A549 (cell line): ENCODE measurements at regions of chr15 and their contacts with region 1.

Region 1: GRCh38 chr15:100918034-100918689 is 995 bp upstream of the LRRK1 start:
- DNase-seq: peak; percentile 92 to 97
- ATAC-seq: peak; percentile 81 to 94
- H3K4me3 ChIP-seq: peak overlapping the region; percentile 79
- H3K27ac ChIP-seq: peak overlapping the region; percentile 94 to 95
- H3K4me1 ChIP-seq: peaks cover 17% of the 10 kb centered on the region
- CTCF ChIP-seq: peak; percentile 97
- EP300 ChIP-seq: no peak
- POLR2A ChIP-seq: peak; percentile 55
- RAD21 ChIP-seq: peak; percentile 90 to 97

Region 2: DNA sequence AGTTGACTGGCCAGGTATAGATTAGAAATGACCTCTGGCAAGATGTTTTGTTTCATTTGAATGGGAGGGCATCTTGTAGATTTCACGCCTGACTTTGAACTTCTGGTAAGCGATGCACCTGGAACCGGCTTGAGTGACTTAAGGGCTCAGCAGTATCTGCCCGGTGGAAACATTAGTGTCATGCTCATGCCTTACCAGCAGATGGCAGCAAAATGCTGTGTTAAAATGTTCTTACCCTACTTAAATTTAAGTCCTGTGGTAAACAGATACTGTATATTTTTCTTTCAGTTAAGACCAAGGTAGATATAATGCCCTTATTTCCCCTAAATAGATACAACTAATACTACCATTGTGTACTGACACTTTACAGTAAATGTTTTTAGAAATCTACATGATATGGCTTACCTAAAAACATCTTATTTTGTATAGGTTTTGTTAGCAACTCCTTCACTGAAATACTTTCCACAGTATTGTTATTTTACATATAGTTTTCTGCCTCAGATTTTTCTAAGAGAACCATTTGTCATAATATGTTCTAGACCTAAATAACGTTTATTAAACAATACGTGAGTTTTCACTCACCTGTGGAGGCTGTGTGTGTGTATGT is 290.3 kb before region 1 on chr15:
- CTCF ChIA-PET with region 1: interaction called, 14 read pairs
- POLR2A ChIA-PET with region 1: no interaction called
- DNase-seq: peak; percentile 58 to 84
- ATAC-seq: peak; percentile 88 to 95
- H3K4me3 ChIP-seq: no peak overlapping the region
- H3K27ac ChIP-seq: no peak overlapping the region
- H3K4me1 ChIP-seq: no peaks in the 10 kb centered on the region
- CTCF ChIP-seq: peak; percentile 96
- EP300 ChIP-seq: no peak
- POLR2A ChIP-seq: no peak
- RAD21 ChIP-seq: peak; percentile 93

Region 3: DNA sequence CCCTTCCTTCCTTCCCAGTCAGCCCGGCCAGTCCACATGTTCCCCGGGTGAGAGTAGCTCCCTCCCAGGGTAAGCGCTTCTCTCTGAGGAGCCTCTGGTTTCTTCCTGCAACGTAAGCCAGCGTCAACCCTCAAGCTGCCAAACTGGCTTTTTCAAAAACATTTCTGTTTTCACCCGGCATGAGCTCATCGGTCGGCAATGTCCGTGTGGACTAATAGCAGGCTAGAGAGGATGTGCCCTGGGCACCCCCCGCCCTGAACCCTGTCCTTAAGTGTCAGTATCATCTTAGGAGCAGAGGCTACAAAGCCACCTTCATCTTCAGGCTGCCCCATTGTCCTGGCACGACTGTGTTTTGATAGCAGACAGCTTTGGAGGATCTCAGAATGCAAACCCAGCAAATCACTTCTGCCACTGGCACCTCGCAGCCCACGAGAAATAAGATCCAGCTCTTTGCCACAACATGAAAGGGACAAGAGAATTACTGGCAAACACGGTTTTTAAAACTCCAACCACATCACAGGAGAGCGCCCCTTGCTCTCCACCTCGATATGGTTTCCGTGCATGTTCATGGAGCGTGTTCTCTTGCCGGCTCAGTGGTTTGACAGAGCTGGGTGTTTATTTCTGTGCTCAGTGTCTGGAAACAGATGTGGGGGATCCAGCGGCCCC is 28.6 kb before region 1 on chr15:
- CTCF ChIA-PET with region 1: interaction called, 26 read pairs
- POLR2A ChIA-PET with region 1: no interaction called
- DNase-seq: no peak
- ATAC-seq: no peak; a peak in 1 of 6 replicates
- H3K4me3 ChIP-seq: no peak overlapping the region
- H3K27ac ChIP-seq: no peak overlapping the region
- H3K4me1 ChIP-seq: no peaks in the 10 kb centered on the region
- CTCF ChIP-seq: no peak
- EP300 ChIP-seq: no peak
- POLR2A ChIP-seq: no peak
- RAD21 ChIP-seq: no peak

Region 4: GRCh38 chr15:100934726-100935125 is 16.6 kb after region 1 on chr15:
- CTCF ChIA-PET with region 1: interaction called, 65 read pairs
- POLR2A ChIA-PET with region 1: interaction called, 3 read pairs
- DNase-seq: peak in 1 of 2 experiments; percentile 58
- ATAC-seq: peak; percentile 85 to 88
- H3K4me3 ChIP-seq: no peak overlapping the region
- H3K27ac ChIP-seq: peak overlapping the region in 1 of 2 experiments; percentile 29; a peak in 2 of 6 replicates
- H3K4me1 ChIP-seq: peaks cover 9% of the 10 kb centered on the region; the same call in 2 of the 3 replicates
- CTCF ChIP-seq: peak; percentile 7; the same call in 1 of the 3 replicates
- EP300 ChIP-seq: no peak
- POLR2A ChIP-seq: no peak
- RAD21 ChIP-seq: peak in 1 of 2 experiments; percentile 41; a peak in 2 of 5 replicates

Region 5: DNA sequence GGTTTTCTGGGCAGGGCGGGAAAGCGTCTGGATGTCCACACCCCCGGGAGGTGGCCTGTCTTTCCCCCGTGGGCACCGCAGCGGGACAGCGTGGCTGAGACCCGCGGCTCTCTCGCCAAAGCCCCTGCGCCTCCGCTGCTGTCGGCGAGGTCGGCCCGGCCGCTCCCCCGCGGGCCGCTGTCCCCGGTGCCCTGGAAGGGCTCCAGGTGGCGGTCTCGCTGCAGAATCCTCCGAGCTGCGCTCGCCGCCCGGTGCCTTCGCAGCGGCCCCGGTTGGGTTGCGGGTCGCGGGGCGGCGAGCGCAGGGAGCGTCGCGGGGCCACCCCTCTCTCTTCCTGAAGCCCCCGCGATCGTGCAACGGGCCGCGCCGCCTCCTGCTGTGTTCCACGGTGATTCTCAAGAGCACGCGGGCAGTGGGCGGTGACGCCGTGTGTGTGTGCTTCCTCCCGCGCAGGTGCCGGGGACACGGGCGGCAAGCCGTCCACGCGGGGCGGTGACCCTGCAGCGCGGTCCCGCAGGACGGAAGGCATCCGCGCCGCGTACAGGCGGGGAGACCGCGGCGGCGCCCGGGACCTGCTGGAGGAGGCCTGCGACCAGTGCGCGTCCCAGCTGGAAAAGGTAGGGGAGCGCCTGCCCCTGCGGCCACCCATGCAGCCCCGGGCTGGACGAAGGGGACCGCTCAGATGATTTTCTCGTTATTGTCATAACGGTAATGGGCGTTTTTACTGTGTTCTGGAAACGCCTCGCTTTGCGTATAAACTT is 55.4 kb after region 1 on chr15:
- CTCF ChIA-PET with region 1: interaction called, 11 read pairs
- POLR2A ChIA-PET with region 1: no interaction called
- DNase-seq: no peak
- ATAC-seq: no peak
- H3K4me3 ChIP-seq: no peak overlapping the region
- H3K27ac ChIP-seq: no peak overlapping the region
- H3K4me1 ChIP-seq: no peaks in the 10 kb centered on the region
- CTCF ChIP-seq: no peak
- EP300 ChIP-seq: no peak
- POLR2A ChIP-seq: no peak
- RAD21 ChIP-seq: no peak

Region 6: GRCh38 chr15:101121511-101122090 is 203.4 kb after region 1 on chr15:
- CTCF ChIA-PET with region 1: no interaction called
- POLR2A ChIA-PET with region 1: no interaction called
- DNase-seq: no peak
- ATAC-seq: peak; percentile 42 to 60; a peak in 3 of 6 replicates
- H3K4me3 ChIP-seq: no peak overlapping the region
- H3K27ac ChIP-seq: no peak overlapping the region
- H3K4me1 ChIP-seq: no peaks in the 10 kb centered on the region
- CTCF ChIP-seq: no peak
- EP300 ChIP-seq: no peak
- POLR2A ChIP-seq: no peak
- RAD21 ChIP-seq: no peak

Region 7: GRCh38 chr15:101201406-101202174 is 283.4 kb after region 1 on chr15:
- CTCF ChIA-PET with region 1: no interaction called
- POLR2A ChIA-PET with region 1: no interaction called
- DNase-seq: peak; percentile 80 to 93
- ATAC-seq: peak; percentile 99 to 100
- H3K4me3 ChIP-seq: no peak overlapping the region
- H3K27ac ChIP-seq: peak overlapping the region; percentile 7 to 55; a peak in 3 of 6 replicates
- H3K4me1 ChIP-seq: peaks cover 44% of the 10 kb centered on the region
- CTCF ChIP-seq: no peak
- EP300 ChIP-seq: no peak
- POLR2A ChIP-seq: no peak
- RAD21 ChIP-seq: no peak

Region 8: GRCh38 chr15:101258238-101259144 is 340.3 kb after region 1 on chr15:
- CTCF ChIA-PET with region 1: interaction called, 14 read pairs
- POLR2A ChIA-PET with region 1: no interaction called
- DNase-seq: peak; percentile 61 to 79
- ATAC-seq: peak; percentile 78 to 88
- H3K4me3 ChIP-seq: no peak overlapping the region
- H3K27ac ChIP-seq: no peak overlapping the region
- H3K4me1 ChIP-seq: 0 out of 3 replicates have a peak, but pooled peaks cover 3% of the 10 kb centered on the region
- CTCF ChIP-seq: peak; percentile 99
- EP300 ChIP-seq: no peak
- POLR2A ChIP-seq: no peak
- RAD21 ChIP-seq: peak; percentile 99 to 100